ENCODE measurements at regions of chr3 and their contacts with region 1.

Region 1: GRCh38 chr3:151439652-151440129 is 21.2 kb downstream of the IGSF10 start:
- DNase-seq: no peak
- H3K4me3 ChIP-seq: no peak overlapping the region
- CTCF ChIP-seq: peak; percentile 52

Region 2: DNA sequence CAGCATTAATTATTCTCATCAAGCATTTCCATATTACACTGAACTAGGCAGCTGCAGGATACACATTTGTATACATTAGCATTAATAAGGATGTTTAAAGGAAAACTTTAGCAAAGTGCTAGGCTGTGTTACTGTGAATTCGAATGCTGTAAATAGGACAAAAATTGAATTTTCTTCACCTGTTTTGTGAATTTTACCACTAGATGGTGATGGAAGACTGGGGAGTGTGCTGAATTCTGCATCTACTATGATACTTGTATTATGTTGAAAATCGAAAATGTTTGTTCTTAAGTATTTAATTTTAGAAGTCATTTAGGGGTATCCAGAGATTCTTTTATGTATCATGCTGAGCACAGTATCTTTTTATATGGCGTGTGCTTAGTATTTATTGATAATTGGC is 149.0 kb before region 1 on chr3:
- CTCF ChIA-PET with region 1: interaction called, 18 read pairs
- POLR2A ChIA-PET with region 1: no interaction called
- DNase-seq: no peak
- H3K4me3 ChIP-seq: no peak overlapping the region
- CTCF ChIP-seq: peak; percentile 28

Region 3: DNA sequence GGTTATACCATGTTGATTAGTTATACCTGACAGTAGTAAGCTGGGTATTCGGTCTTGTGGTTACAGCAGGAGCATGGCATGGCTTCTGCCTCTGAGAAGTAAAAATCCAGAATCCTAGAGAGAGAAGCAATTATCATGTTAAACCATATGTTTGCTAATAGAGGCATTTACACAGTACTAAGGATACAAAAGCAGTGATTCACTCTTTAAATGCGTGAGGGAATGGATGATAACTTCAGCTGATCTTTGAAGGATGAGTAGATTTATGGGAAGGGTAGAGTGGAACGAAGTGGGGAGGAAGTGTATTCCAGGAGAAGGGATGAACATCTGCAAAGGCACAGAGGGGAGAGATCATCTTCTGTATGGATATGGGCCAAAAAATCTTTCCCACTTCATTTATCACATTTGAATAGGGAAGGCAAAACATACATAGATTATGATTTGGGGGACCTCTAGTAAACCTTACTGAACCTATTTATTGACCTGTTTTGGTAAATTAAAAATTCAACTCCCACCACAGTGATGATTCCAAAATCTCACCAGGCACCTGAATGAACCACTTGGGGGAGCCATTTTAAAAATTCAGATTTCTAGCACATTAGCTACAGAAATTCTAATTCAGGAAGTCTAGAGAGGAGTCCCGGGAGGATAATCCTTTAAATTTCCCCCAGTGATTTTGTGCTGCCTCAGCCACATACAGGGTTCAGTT is 13.9 kb before region 1 on chr3:
- CTCF ChIA-PET with region 1: interaction called, 63 read pairs
- POLR2A ChIA-PET with region 1: no interaction called
- DNase-seq: no peak
- H3K4me3 ChIP-seq: no peak overlapping the region
- CTCF ChIP-seq: no peak

Region 4: GRCh38 chr3:151660885-151661284 is 221.2 kb after region 1 on chr3:
- CTCF ChIA-PET with region 1: interaction called, 13 read pairs
- POLR2A ChIA-PET with region 1: no interaction called
- DNase-seq: no peak
- H3K4me3 ChIP-seq: no peak overlapping the region
- CTCF ChIP-seq: no peak

Region 5: DNA sequence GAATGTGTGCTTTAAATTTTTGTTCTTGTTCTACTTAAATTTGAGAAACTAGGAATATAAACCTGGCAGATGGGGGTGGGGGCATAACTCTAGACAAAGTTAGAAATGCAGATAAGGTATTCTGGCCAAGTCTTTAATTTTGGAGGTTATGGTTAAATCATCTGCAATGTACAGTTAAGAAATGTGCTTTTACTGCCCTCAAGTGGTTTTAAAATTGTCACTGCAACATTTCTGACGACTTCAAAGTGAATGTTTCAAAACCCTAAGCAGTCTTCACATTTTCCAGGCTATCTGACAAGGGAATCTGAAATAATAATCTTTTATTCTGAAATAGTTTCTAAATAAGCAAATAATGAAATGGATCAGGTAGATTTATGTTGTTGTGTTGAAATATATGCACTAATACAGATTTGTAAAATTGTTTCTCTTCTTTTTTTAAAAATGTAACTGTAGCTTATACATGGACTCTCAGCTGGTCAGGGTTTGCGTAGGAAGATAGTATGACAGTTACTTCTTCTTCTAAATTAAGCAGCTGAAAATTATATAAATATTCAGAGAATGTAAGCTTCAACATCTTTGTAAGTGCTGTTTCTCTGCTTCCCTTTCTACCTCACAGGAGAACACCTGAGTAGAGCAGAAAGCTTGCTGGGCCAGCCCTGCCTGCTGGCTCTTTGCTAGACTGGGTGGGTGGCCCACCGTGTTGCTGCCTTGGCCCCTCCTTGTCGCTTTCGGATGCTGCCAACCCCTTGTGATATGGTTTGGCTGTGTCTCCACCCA is 478.8 kb after region 1 on chr3:
- CTCF ChIA-PET with region 1: interaction called, 83 read pairs
- POLR2A ChIA-PET with region 1: no interaction called
- DNase-seq: no peak
- H3K4me3 ChIP-seq: no peak overlapping the region
- CTCF ChIP-seq: peak; percentile 47

Measured in AG04449 (cell line).